Sigmoid colon (tissue), 7 donors: ENCODE measurements at regions of chr7 and their contacts with region 1.

Region 1: DNA sequence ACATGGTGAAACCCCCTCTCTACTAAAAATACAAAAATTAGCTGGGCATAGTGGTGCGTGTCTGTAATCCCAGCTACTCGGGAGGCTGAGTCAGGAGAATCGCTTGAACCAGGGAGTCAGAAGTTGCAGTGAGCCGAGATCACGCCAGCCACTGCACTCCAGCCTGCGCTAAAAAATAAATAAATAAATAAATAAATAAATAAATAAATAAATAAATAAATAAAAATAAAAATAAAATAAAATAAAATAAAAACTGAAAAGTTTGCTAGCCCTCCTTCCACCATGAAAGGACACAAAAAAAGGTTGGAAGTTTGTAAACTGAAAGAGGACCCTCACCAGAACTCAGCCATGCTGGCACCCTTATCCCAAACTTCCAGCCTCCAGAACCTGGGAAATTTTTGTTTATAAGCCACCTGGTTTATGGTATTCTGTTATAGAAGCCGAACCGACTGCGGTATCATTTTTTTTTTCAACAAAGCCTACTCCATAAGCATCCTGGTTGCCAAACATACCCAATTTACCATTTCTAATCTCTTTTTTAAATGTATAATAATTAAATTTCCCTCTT is 448.2 kb downstream of the SEMA3D start:
- DNase-seq: no peak
- H3K4me3 ChIP-seq: no peak overlapping the region
- H3K27ac ChIP-seq: no peak overlapping the region
- H3K4me1 ChIP-seq: no peaks in the 10 kb centered on the region
- H3K27me3 ChIP-seq: no peaks in the 10 kb centered on the region
- CTCF ChIP-seq: no peak
- EP300 ChIP-seq: no peak
- POLR2A ChIP-seq: no peak

Region 2: GRCh38 chr7:84757761-84758160 is 19.1 kb after region 1 on chr7:
- intact Hi-C with region 1: loop called (anchors 1 kb)
- DNase-seq: no peak
- H3K4me3 ChIP-seq: no peak overlapping the region
- H3K27ac ChIP-seq: no peak overlapping the region
- H3K4me1 ChIP-seq: no peaks in the 10 kb centered on the region
- H3K27me3 ChIP-seq: no peaks in the 10 kb centered on the region
- CTCF ChIP-seq: no peak
- EP300 ChIP-seq: no peak
- POLR2A ChIP-seq: no peak